GM12878 (cell line): ENCODE measurements at regions of chr19 and their contacts with region 1.

Region 1: DNA sequence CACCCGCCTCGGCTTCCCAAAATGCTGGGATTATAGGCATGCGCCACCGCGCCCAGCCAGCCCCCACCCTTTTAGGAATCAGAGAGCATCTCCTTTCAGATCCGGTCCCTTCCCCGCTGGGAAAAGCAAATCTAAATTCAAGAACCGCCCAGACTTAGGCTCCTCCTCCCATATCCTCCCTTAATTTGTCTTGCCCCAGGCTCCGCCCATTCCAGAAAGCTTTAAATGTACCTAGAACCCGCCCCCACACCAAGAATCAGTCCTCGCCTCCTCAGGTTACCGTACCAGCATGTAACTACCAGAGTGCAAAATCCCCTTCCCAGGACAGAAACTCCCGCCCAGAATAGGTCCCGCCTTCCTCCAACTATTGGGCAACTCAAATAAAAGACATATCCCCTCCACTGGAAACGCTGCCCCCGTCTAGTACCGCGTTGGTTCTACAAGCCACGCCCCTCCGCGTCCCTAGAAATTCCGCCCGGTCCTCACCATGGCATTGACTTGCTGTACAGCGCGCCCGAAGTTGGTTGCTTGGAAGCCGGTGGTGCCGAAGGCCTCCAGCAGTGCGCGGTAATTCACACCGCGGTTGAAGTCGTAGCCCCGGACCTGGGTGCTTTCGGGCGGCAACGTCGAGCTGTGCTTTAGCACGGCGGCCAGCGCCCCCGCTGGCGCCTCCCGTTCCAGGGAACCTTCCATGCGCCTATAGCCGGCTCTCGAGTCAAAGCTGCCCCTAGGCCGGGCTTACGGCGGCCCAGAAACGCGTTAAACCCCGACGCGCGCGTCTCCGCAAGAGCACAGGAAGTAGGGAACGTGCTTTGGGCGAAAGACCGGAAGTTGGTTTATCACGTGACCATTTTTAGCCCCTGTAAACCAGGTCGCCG is at the start of gene DHPS:
- DNase-seq: peak; percentile 95
- ATAC-seq: peak; percentile 91
- H3K4me3 ChIP-seq: peak within 1 kb of the TSS; percentile 99
- H3K27ac ChIP-seq: peak within 1 kb of the TSS; percentile 98
- H3K4me1 ChIP-seq: peaks cover 4% of the 10 kb centered on the region; the same call in 1 of the 2 replicates
- H3K27me3 ChIP-seq: no peaks in the 10 kb centered on the region
- CTCF ChIP-seq: no peak
- EP300 ChIP-seq: no peak
- POLR2A ChIP-seq: peak; percentile 98
- RAD21 ChIP-seq: no peak
- polyA plus RNA-seq, gene DHPS: 36.4 to 76.0 TPM

Region 2: GRCh38 chr19:12453491-12453890 is 227.8 kb before region 1 on chr19:
- CTCF ChIA-PET with region 1: no interaction called
- POLR2A ChIA-PET with region 1: no interaction called
- RAD21 ChIA-PET with region 1: no interaction called
- SMC1A ChIA-PET with region 1: no interaction called
- in situ Hi-C with region 1: no loop called
- intact Hi-C with region 1: no loop called
- DNase-seq: no peak
- ATAC-seq: no peak
- H3K4me3 ChIP-seq: no peak overlapping the region
- H3K27ac ChIP-seq: no peak overlapping the region
- H3K4me1 ChIP-seq: no peaks in the 10 kb centered on the region
- H3K27me3 ChIP-seq: no peaks in the 10 kb centered on the region
- CTCF ChIP-seq: no peak
- EP300 ChIP-seq: no peak
- POLR2A ChIP-seq: no peak
- RAD21 ChIP-seq: no peak

Region 3: DNA sequence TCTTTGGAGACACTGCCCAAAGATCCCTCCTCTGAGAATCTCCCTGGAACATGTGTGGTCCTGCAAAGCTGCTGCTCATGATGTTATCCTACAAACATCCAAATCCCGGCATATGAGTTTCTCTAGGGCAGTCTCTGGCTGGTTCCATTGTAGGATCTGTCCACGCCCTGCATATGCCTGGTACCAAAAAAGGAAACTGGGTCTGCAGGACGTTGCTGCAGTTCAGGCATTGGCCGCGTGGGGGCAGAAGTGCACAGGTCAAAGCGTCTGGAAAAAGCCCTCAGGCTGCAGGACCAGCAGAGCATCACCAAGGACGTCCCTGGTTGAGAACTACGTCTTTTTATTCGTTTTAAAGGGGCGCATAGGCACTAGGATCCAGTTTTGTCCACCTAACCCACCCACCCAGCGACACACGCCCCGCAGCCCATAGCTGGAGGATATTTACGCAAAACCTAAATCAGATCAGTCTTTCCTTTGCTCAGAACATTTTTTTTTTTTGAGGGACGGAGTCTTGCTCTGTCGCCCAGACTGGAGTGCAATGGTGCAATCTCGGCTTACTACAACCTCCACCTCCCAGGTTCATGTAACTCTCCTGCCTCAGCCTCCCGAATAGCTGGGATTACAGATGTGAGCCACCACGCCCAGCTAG is 117.2 kb before region 1 on chr19:
- CTCF ChIA-PET with region 1: interaction called, 5 read pairs
- POLR2A ChIA-PET with region 1: no interaction called
- RAD21 ChIA-PET with region 1: no interaction called
- SMC1A ChIA-PET with region 1: interaction called, 3 read pairs
- in situ Hi-C with region 1: no loop called
- intact Hi-C with region 1: loop called (anchors 1 kb)
- DNase-seq: peak; percentile 65
- ATAC-seq: peak; percentile 95
- H3K4me3 ChIP-seq: no peak overlapping the region
- H3K27ac ChIP-seq: no peak overlapping the region
- H3K4me1 ChIP-seq: no peaks in the 10 kb centered on the region
- H3K27me3 ChIP-seq: no peaks in the 10 kb centered on the region
- CTCF ChIP-seq: peak; percentile 98 to 99 (median 99)
- EP300 ChIP-seq: no peak
- POLR2A ChIP-seq: no peak
- RAD21 ChIP-seq: peak; percentile 99